Spleen (tissue), 13 donors: ENCODE measurements at regions of chr9 and their contacts with region 1.

Region 1: GRCh38 chr9:121992571-121993212 is 100.4 kb downstream of the TTLL11 start:
- DNase-seq: no peak
- H3K4me3 ChIP-seq: no peak overlapping the region
- H3K27ac ChIP-seq: peak overlapping the region in 1 of 8 donors; percentile 14
- H3K4me1 ChIP-seq: peaks cover 0 to 22% (median 3%) of the 10 kb centered on the region in 6 donors
- H3K27me3 ChIP-seq: no peaks in the 10 kb centered on the region
- CTCF ChIP-seq: peak; percentile 62 to 88 (median 82)
- POLR2A ChIP-seq: no peak

Region 2: GRCh38 chr9:121545875-121546423 is 446.7 kb before region 1 on chr9:
- intact Hi-C with region 1: loop called (anchors 5 kb)
- DNase-seq: peak; percentile 95
- H3K4me3 ChIP-seq: peak overlapping the region in 1 of 8 donors; percentile 24
- H3K27ac ChIP-seq: peak overlapping the region in 1 of 8 donors; percentile 41
- H3K4me1 ChIP-seq: peaks cover 12 to 25% (median 20%) of the 10 kb centered on the region in 6 donors
- H3K27me3 ChIP-seq: peaks cover 0 to 58% (median 0%) of the 10 kb centered on the region in 7 donors
- CTCF ChIP-seq: peak; percentile 76 to 96 (median 92)
- POLR2A ChIP-seq: no peak

Region 3: DNA sequence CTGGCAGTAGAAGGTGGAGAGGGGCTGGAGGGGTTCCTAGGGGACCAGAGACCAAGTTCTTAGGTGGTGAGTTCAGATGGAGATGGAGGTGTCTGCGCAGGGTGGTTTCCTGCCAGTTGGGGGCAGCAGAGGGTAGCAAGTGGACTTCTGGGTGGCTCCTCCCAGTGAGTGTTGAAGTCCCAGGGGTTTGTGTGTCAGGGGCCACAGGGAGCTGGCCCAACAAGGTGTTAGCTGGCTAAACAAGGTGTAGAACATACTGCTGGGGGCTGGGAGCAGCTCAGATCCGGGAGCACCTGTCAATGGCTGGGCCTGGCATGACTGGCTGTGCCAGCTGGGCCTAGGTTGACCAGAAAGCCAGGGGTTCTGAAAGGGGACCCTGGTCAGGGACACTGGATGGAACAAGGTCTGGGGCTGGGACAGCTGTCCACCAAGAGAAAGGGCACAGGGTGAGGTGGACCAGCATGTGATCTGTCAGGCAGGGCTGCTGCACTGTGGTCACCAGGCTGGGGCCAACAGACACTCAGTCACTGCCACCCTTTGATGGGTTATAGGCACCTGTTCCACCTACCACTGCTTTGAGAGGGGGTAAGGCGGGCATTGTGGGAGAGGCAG is 305.7 kb before region 1 on chr9:
- intact Hi-C with region 1: loop called (anchors 2 kb)
- DNase-seq: peak; percentile 88
- H3K4me3 ChIP-seq: no peak overlapping the region
- H3K27ac ChIP-seq: no peak overlapping the region
- H3K4me1 ChIP-seq: peaks cover 0 to 19% (median 4%) of the 10 kb centered on the region in 6 donors
- H3K27me3 ChIP-seq: peaks cover 0 to 17% (median 0%) of the 10 kb centered on the region in 7 donors
- CTCF ChIP-seq: peak; percentile 55 to 90 (median 81)
- POLR2A ChIP-seq: no peak

Region 4: DNA sequence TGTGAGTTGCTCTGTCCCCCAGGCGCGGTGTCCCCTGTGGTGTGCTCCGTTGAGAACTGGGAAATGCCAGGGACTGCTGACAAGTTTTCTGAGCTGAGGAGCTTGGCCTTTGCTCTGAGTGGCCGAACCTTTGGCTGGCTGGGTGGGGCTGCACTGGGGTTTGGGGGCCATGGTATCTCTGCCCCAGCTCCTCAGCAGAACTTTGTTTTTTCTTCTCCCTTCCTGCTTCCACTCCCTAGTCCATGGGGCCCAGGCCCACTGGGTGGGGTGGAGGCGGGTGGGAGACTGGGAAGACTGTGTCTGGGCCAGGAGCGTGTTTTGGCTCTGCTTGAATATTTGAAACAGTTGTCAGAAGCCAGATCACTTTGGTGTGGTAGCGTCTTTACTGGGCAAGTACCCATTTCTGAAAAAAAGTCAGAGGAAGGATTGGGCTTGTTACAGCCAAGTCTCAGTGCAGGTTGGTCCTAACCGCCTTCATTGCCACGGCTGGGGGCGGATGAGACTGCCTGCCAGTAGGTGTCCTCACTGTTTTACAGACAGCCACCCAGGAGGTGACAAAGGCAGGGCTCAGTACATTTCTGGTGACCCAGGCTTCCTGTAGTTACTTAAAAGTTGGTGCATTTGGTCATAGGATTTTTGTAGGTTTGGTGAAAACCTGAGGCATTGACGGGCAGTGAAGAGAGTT is 248.5 kb before region 1 on chr9:
- intact Hi-C with region 1: loop called (anchors 10 kb)
- DNase-seq: peak; percentile 86
- H3K4me3 ChIP-seq: peak overlapping the region; percentile 21 to 68 (median 33)
- H3K27ac ChIP-seq: peak overlapping the region; percentile 75 to 87 (median 84)
- H3K4me1 ChIP-seq: peaks cover 24 to 81% (median 57%) of the 10 kb centered on the region in 6 donors
- H3K27me3 ChIP-seq: no peaks in the 10 kb centered on the region
- CTCF ChIP-seq: peak in 10 of 11 experiments; percentile 16 to 71 (median 52)
- POLR2A ChIP-seq: no peak

Region 5: DNA sequence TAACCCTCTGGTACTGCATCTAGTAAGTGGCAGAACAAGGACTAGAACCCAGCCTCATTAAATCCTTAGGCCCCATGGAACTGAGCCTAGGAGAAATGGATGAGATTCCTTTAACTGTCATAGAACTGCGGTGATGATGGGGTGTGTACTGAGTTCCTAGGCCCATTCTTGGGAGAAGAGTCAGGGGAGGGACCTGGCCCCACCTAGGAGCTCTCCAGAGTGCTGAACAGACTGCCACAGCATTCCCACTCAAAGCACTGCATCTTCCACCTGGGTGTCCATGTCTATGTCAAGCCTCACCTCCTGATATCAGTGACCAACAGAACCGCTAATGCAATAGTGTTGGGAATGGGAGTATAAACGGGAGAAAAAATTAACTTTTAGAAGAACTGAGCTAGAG is 63.8 kb after region 1 on chr9:
- intact Hi-C with region 1: no loop called
- DNase-seq: no peak
- H3K4me3 ChIP-seq: no peak overlapping the region
- H3K27ac ChIP-seq: no peak overlapping the region
- H3K4me1 ChIP-seq: peaks cover 0 to 6% (median 0%) of the 10 kb centered on the region in 6 donors
- H3K27me3 ChIP-seq: no peaks in the 10 kb centered on the region
- CTCF ChIP-seq: no peak
- POLR2A ChIP-seq: no peak